Heart left ventricle (tissue), 16 donors: ENCODE measurements at regions of chr4 and their contacts with region 1.

Region 1: DNA sequence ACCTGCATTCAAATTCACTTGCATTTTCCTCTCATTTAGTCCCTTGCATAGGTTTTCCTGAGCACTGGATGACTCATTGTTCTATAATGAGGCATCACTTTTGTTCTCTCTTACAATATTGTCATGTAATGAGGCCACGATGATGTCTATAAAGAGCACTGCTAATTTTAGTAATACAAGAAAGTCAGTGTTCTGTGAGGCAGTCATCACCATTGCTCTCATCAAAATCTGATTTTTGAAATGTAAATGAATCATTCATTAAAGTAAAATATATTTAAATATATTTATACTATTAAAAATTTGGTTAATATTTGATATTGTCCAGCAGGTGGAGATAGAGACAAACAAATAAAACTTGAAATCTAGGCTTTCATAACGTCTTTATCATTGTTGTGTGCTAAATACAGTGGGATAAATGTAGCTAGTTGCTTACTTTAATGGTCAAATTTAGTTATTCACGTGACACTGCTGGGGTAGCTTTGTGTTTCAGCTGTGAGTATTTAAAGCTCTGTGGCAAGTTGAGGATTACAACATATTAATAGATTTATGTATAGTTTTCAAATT is 15.4 kb downstream of the HMGB2 start:
- DNase-seq: no peak
- ATAC-seq: peak; percentile 78 to 89 (median 86)
- H3K4me3 ChIP-seq: no peak overlapping the region
- H3K27ac ChIP-seq: peak overlapping the region in 2 of 12 donors; percentile 11 to 20
- H3K4me1 ChIP-seq: peaks cover 0 to 14% (median 7%) of the 10 kb centered on the region in 12 donors
- H3K27me3 ChIP-seq: no peaks in the 10 kb centered on the region
- CTCF ChIP-seq: peak; percentile 41 to 73 (median 55)
- POLR2A ChIP-seq: no peak

Region 2: GRCh38 chr4:173360587-173361221 is 42.0 kb after region 1 on chr4:
- intact Hi-C with region 1: loop called in 1 of 10 experiments (anchors 2 kb)
- DNase-seq: no peak
- ATAC-seq: no peak
- H3K4me3 ChIP-seq: no peak overlapping the region
- H3K27ac ChIP-seq: no peak overlapping the region
- H3K4me1 ChIP-seq: peaks cover 0 to 4% (median 0%) of the 10 kb centered on the region in 12 donors
- H3K27me3 ChIP-seq: no peaks in the 10 kb centered on the region
- CTCF ChIP-seq: peak in 9 of 12 donors; percentile 27 to 48 (median 38)
- POLR2A ChIP-seq: no peak

Region 3: GRCh38 chr4:173494013-173494970 is 175.6 kb after region 1 on chr4:
- intact Hi-C with region 1: loop called (anchors 5 to 10 kb)
- DNase-seq: peak in 4 of 5 donors; percentile 46 to 65 (median 55)
- ATAC-seq: peak; percentile 79 to 95 (median 92)
- H3K4me3 ChIP-seq: peak overlapping the region in 11 of 12 donors; percentile 17 to 56 (median 44)
- H3K27ac ChIP-seq: peak overlapping the region in 1 of 12 donors; percentile 31
- H3K4me1 ChIP-seq: peaks cover 0 to 27% (median 9%) of the 10 kb centered on the region in 12 donors
- H3K27me3 ChIP-seq: peaks cover 0 to 17% (median 0%) of the 10 kb centered on the region in 9 donors
- CTCF ChIP-seq: peak; percentile 60 to 86 (median 74)
- POLR2A ChIP-seq: no peak

Region 4: GRCh38 chr4:173766171-173766600 is 447.5 kb after region 1 on chr4:
- intact Hi-C with region 1: loop called in 1 of 10 experiments (anchors 10 kb)
- DNase-seq: no peak
- ATAC-seq: peak in 2 of 4 donors; percentile 20 to 30
- H3K4me3 ChIP-seq: no peak overlapping the region
- H3K27ac ChIP-seq: no peak overlapping the region
- H3K4me1 ChIP-seq: peaks cover 0 to 15% (median 1%) of the 10 kb centered on the region in 12 donors
- H3K27me3 ChIP-seq: no peaks in the 10 kb centered on the region
- CTCF ChIP-seq: no peak
- POLR2A ChIP-seq: no peak